Natural killer cell (primary cell): ENCODE measurements at regions of chr10 and their contacts with region 1.

Region 1: DNA sequence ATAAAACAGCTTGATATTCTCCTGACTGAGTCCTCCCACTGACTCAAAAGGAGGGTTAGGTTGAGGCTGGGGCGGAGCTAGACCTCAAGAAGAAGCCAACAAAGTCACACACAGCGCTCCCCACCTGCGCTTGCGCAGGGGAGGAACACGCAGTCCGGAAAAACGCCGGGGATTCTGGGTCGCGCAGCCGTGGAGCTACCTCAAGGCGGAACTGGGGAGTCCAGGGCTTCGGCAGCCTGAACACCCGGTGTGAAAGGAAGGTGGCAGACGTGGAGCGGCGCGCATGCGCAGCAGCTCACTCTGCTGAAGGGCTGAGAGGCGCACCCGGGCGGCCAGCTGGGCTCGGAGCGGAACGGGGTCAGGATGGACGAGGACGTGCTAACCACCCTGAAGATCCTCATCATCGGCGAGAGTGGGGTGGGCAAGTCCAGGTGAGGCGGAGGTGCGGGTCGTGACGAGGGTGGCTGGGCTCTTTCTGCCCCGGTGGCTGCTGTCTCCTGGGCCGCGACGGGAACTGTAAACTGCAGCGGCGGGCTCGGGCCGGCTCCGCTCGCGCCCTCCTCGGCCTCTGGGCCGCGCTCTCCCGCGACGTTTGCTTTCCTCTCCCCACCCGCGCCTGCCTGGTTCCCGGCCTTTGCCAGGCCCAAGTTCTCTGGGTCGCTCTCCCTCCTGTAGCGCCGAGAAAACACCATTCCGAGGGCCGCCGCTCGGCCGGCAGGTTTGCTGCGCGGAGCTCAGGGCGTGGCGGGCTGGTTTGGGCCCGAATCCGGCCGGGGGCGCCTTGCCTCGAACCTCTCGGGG is at the start of gene RAB18:
- DNase-seq: peak; percentile 95 to 100
- ATAC-seq: peak; percentile 92 to 98 (median 92)
- H3K4me3 ChIP-seq: peak within 1 kb of the TSS; percentile 73
- H3K4me3 Mint-ChIP-seq: peak within 1 kb of the TSS; percentile 100
- H3K27ac ChIP-seq: peak within 1 kb of the TSS; percentile 85
- H3K27ac Mint-ChIP-seq: peak within 1 kb of the TSS; percentile 98 to 100
- H3K4me1 ChIP-seq: peaks cover 19% of the 10 kb centered on the region
- H3K4me1 Mint-ChIP-seq: peaks cover 50 to 55% of the 10 kb centered on the region in 2 donors
- H3K27me3 ChIP-seq: no peaks in the 10 kb centered on the region
- H3K27me3 Mint-ChIP-seq: peaks cover 10 to 17% of the 10 kb centered on the region in 2 donors
- CTCF ChIP-seq: no peak
- total RNA-seq, gene RAB18: 122 to 132 (median 122) TPM

Region 2: DNA sequence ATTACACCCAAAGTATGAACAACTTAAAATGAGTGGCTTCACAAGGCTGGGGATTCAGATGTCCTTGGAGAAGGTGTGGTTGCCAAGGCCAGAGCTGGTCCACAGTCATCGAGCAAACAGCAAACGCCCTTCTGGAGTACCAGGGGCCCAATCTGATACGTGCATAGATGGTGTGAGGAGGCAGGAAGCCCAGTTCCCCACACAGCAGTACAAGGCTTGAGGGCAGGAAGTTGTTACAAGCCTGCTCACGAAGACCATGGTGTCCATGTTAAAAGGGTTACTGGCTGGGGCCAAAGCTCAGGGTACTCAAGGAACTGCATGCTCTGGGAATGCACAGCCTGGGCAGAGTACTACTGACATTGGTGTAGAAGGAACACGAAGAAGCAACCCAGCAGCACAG is 399.3 kb before region 1 on chr10:
- intact Hi-C with region 1: no loop called
- DNase-seq: peak in 1 of 2 donors; percentile 45
- ATAC-seq: peak in 2 of 3 donors; percentile 23 to 41
- H3K4me3 ChIP-seq: no peak overlapping the region
- H3K4me3 Mint-ChIP-seq: no peak overlapping the region
- H3K27ac ChIP-seq: no peak overlapping the region
- H3K27ac Mint-ChIP-seq: peak overlapping the region; percentile 50 to 69
- H3K4me1 ChIP-seq: peaks cover 22% of the 10 kb centered on the region
- H3K4me1 Mint-ChIP-seq: peaks cover 24 to 27% of the 10 kb centered on the region in 2 donors
- H3K27me3 ChIP-seq: no peaks in the 10 kb centered on the region
- H3K27me3 Mint-ChIP-seq: peaks cover 0 to 3% of the 10 kb centered on the region in 2 donors
- CTCF ChIP-seq: no peak

Region 3: GRCh38 chr10:27241652-27242472 is 262.3 kb before region 1 on chr10:
- intact Hi-C with region 1: loop called (anchors 5 kb)
- DNase-seq: peak; percentile 86 to 95
- ATAC-seq: peak; percentile 76 to 88 (median 82)
- H3K4me3 ChIP-seq: peak overlapping the region; percentile 81
- H3K4me3 Mint-ChIP-seq: peak overlapping the region; percentile 95
- H3K27ac ChIP-seq: peak overlapping the region; percentile 87
- H3K27ac Mint-ChIP-seq: peak overlapping the region; percentile 98
- H3K4me1 ChIP-seq: peaks cover 35% of the 10 kb centered on the region
- H3K4me1 Mint-ChIP-seq: peaks cover 41 to 44% of the 10 kb centered on the region in 2 donors
- H3K27me3 ChIP-seq: no peaks in the 10 kb centered on the region
- H3K27me3 Mint-ChIP-seq: no peaks in the 10 kb centered on the region
- CTCF ChIP-seq: peak; percentile 14

Region 4: DNA sequence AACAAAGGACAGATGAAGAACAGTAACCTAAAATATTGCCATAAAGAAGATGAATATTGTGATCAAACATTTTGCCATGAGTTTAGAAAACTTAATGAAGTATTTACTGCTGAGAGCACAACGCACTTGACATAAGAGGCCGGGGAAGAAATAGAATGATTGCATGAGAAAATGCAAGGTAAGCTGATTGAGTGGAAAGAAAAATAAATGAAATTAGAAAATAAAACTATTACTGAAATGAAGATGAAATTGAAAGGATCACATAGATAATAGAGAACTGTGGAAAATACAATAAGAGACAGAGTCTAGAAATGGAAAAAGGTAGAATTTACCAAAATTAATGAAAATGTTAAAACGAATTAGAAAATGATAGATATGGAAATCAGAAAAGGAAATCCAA is 10.0 kb after region 1 on chr10:
- intact Hi-C with region 1: no loop called
- DNase-seq: no peak
- ATAC-seq: no peak
- H3K4me3 ChIP-seq: no peak overlapping the region
- H3K4me3 Mint-ChIP-seq: no peak overlapping the region
- H3K27ac ChIP-seq: no peak overlapping the region
- H3K27ac Mint-ChIP-seq: peak overlapping the region; percentile 61 to 77
- H3K4me1 ChIP-seq: peaks cover 11% of the 10 kb centered on the region
- H3K4me1 Mint-ChIP-seq: peaks cover 52 to 54% of the 10 kb centered on the region in 2 donors
- H3K27me3 ChIP-seq: no peaks in the 10 kb centered on the region
- H3K27me3 Mint-ChIP-seq: no peaks in the 10 kb centered on the region
- CTCF ChIP-seq: no peak

Region 5: GRCh38 chr10:27525819-27526218 is 21.6 kb after region 1 on chr10:
- intact Hi-C with region 1: loop called (anchors 2 kb)
- DNase-seq: no peak
- ATAC-seq: no peak
- H3K4me3 ChIP-seq: no peak overlapping the region
- H3K4me3 Mint-ChIP-seq: no peak overlapping the region
- H3K27ac ChIP-seq: no peak overlapping the region
- H3K27ac Mint-ChIP-seq: no peak overlapping the region
- H3K4me1 ChIP-seq: no peaks in the 10 kb centered on the region
- H3K4me1 Mint-ChIP-seq: peaks cover 62 to 72% of the 10 kb centered on the region in 2 donors
- H3K27me3 ChIP-seq: no peaks in the 10 kb centered on the region
- H3K27me3 Mint-ChIP-seq: no peaks in the 10 kb centered on the region
- CTCF ChIP-seq: no peak

Region 6: GRCh38 chr10:28302638-28303488 is 798.7 kb after region 1 on chr10 and contains the start of gene MPP7:
- intact Hi-C with region 1: loop called (anchors 1 kb)
- DNase-seq: peak; percentile 97 to 99
- ATAC-seq: peak; percentile 88 to 98 (median 88)
- H3K4me3 ChIP-seq: peak within 1 kb of the TSS; percentile 59
- H3K4me3 Mint-ChIP-seq: peak within 1 kb of the TSS; percentile 96
- H3K27ac ChIP-seq: peak within 1 kb of the TSS; percentile 72
- H3K27ac Mint-ChIP-seq: peak within 1 kb of the TSS; percentile 91
- H3K4me1 ChIP-seq: peaks cover 4% of the 10 kb centered on the region
- H3K4me1 Mint-ChIP-seq: peaks cover 26 to 31% of the 10 kb centered on the region in 2 donors
- H3K27me3 ChIP-seq: no peaks in the 10 kb centered on the region
- H3K27me3 Mint-ChIP-seq: peaks cover 9% of the 10 kb centered on the region in 2 donors
- CTCF ChIP-seq: peak; percentile 57
- total RNA-seq, gene MPP7: 11.5 to 21.0 (median 19.1) TPM